ENCODE measurements at regions of chr7 and their contacts with region 1.

Region 1: GRCh38 chr7:142478479-142479072 is 220.7 kb upstream of the PRSS58 start:
- DNase-seq: peak; percentile 56
- ATAC-seq: peak; percentile 56
- H3K4me3 Mint-ChIP-seq: no peak overlapping the region
- H3K27ac Mint-ChIP-seq: peak overlapping the region; percentile 79
- H3K4me1 Mint-ChIP-seq: peaks cover 79% of the 10 kb centered on the region
- H3K27me3 Mint-ChIP-seq: no peaks in the 10 kb centered on the region

Region 2: DNA sequence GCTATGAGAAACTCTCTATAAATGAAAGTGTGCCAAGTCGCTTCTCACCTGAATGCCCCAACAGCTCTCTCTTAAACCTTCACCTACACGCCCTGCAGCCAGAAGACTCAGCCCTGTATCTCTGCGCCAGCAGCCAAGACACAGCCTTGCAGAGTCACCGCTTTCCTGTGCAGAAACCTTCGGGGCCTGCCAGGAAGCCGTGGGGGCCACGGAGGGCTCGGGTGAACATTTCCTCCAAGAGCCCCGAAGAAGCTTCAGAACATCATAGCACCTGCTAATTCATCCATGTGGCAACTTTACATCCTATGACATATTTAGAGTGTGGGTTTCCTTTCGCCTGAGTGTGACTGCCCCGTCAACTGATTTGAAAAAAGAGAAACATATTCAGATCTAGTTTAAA is 165.0 kb before region 1 on chr7:
- CTCF ChIA-PET with region 1: no interaction called
- POLR2A ChIA-PET with region 1: no interaction called
- intact Hi-C with region 1: no loop called
- DNase-seq: peak; percentile 63
- ATAC-seq: peak; percentile 82
- H3K4me3 Mint-ChIP-seq: peak overlapping the region; percentile 55
- H3K27ac Mint-ChIP-seq: peak overlapping the region; percentile 37
- H3K4me1 Mint-ChIP-seq: peaks cover 13% of the 10 kb centered on the region
- H3K27me3 Mint-ChIP-seq: peaks cover 13% of the 10 kb centered on the region

Region 3: DNA sequence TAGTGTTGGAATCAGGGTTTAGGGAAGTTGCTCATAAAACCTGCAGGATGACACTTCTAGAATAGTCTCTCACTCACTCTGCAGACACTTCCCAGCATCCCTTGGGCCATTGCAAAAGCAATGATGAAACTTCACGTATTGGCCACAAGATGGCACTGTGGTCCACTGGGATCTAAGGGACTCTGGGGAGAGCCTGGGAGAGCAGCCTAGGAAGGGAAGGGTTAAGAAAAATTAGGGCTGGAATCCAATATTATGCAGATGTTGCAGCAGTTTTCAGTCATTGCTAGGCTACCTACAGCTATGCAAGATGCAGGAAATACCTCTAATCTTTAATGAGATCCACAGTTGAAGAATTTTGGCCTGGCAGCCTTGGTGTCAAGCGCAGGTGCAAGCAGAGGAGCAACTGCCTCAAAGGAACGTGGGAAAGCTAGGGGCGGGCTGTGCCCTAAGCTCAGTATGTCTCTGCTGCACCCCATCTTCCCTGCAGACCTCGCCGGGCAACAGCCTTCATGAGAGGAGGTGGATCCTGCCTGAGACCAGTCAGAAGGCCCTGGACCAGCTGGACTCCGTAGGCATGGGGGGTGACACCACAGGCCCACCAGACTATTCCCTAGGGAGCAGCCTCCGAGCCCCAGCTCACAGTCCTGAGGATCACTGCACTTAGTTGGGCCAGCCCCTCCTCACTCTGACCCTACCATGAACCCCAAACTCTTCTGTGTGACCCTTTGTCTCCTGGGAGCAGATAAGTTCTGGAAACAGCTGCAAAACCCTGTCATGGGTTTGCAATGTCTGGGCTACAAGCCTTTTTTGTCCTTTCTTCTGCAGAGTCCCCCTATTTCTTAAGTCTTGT is 92.9 kb before region 1 on chr7:
- CTCF ChIA-PET with region 1: interaction called, 6 read pairs
- POLR2A ChIA-PET with region 1: no interaction called
- intact Hi-C with region 1: loop called in 1 of 2 experiments (anchors 2 kb)
- DNase-seq: peak; percentile 72
- ATAC-seq: peak; percentile 50
- H3K4me3 Mint-ChIP-seq: no peak overlapping the region
- H3K27ac Mint-ChIP-seq: peak overlapping the region; percentile 67
- H3K4me1 Mint-ChIP-seq: peaks cover 27% of the 10 kb centered on the region
- H3K27me3 Mint-ChIP-seq: no peaks in the 10 kb centered on the region

Region 4: GRCh38 chr7:142412551-142413193 is 65.9 kb before region 1 on chr7:
- CTCF ChIA-PET with region 1: interaction called, 6 read pairs
- POLR2A ChIA-PET with region 1: no interaction called
- intact Hi-C with region 1: loop called in 1 of 2 experiments (anchors 2 kb)
- DNase-seq: peak; percentile 67
- ATAC-seq: peak; percentile 91
- H3K4me3 Mint-ChIP-seq: no peak overlapping the region
- H3K27ac Mint-ChIP-seq: peak overlapping the region; percentile 16
- H3K4me1 Mint-ChIP-seq: peaks cover 2% of the 10 kb centered on the region
- H3K27me3 Mint-ChIP-seq: no peaks in the 10 kb centered on the region

Region 5: GRCh38 chr7:142459551-142459963 is 19.0 kb before region 1 on chr7:
- CTCF ChIA-PET with region 1: interaction called, 146 read pairs
- POLR2A ChIA-PET with region 1: no interaction called
- intact Hi-C with region 1: loop called (anchors 1 kb)
- DNase-seq: peak; percentile 56
- ATAC-seq: peak; percentile 63
- H3K4me3 Mint-ChIP-seq: peak overlapping the region; percentile 7
- H3K27ac Mint-ChIP-seq: no peak overlapping the region
- H3K4me1 Mint-ChIP-seq: peaks cover 49% of the 10 kb centered on the region
- H3K27me3 Mint-ChIP-seq: no peaks in the 10 kb centered on the region

Region 6: DNA sequence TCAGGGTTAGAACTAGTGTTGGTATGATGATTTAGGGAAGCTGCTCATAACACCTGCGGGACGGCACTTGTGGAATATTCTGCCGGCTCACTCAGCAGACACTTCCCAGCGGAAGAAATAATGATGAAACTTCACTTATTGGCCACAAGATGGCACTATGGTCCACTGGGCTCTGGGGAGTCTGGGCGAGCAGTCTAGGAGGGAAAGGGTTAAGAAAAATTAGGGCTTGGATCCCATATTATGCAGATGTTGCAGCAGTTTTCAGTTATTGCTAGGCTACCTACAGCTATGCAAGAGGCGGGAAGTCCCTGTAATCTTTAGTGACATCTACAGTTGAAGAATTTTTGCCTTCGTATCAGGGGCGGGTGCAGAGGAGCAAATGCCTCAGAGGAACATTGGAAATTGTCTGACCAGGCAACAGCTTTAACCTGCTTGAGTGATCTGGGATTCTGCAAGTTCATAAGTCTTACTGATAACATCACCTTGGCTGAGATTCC is 18.0 kb after region 1 on chr7:
- CTCF ChIA-PET with region 1: interaction called, 127 read pairs
- POLR2A ChIA-PET with region 1: no interaction called
- intact Hi-C with region 1: no loop called
- DNase-seq: peak; percentile 50
- ATAC-seq: peak; percentile 27
- H3K4me3 Mint-ChIP-seq: peak overlapping the region; percentile 36
- H3K27ac Mint-ChIP-seq: peak overlapping the region; percentile 49
- H3K4me1 Mint-ChIP-seq: peaks cover 50% of the 10 kb centered on the region
- H3K27me3 Mint-ChIP-seq: no peaks in the 10 kb centered on the region

Measured in activated CD4-positive, alpha-beta T cell treated with anti-CD3 and anti-CD28 coated beads for 36 hours (primary cell).